ENCODE measurements at regions of chr18 and their contacts with region 1.

Region 1: DNA sequence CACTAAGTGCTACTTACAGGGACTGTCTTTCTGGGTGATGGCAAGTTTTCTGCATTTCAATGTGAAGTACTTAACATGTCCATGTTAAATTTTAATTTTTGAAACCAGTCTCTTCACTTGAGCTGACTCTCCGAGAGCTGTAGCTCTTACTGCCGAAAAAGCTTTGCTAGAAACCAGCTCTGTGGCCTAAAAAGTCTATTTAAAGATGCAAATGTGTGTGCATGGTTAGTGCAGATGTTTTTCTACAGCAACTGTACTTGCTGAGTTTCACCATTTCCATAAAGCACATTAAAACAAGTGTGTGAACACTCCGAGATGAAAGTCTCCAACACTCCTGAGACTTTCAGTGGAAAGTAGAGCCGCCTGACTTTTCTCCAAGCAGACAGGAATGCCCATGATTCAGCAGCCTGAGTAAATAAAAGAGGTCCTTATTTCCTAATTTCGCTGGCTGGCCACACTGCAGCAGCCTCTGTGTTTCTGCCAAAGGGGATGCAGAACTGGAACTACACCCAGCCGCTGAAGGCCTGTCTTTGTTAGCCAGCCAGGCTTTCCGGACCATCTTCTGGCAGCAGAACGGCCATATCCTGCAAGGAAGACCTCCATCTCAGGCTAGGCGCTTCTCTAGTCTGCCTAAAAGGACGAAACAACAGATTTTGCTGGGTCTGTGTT is 121.2 kb downstream of the ZNF521 start:
- DNase-seq: peak; percentile 84
- ATAC-seq: peak; percentile 87 to 91

Region 2: GRCh38 chr18:24987303-24988252 is 243.2 kb before region 1 on chr18:
- intact Hi-C with region 1: loop called in 1 of 2 experiments (anchors 10 kb)
- DNase-seq: peak; percentile 51
- ATAC-seq: peak; percentile 65 to 83

Region 3: DNA sequence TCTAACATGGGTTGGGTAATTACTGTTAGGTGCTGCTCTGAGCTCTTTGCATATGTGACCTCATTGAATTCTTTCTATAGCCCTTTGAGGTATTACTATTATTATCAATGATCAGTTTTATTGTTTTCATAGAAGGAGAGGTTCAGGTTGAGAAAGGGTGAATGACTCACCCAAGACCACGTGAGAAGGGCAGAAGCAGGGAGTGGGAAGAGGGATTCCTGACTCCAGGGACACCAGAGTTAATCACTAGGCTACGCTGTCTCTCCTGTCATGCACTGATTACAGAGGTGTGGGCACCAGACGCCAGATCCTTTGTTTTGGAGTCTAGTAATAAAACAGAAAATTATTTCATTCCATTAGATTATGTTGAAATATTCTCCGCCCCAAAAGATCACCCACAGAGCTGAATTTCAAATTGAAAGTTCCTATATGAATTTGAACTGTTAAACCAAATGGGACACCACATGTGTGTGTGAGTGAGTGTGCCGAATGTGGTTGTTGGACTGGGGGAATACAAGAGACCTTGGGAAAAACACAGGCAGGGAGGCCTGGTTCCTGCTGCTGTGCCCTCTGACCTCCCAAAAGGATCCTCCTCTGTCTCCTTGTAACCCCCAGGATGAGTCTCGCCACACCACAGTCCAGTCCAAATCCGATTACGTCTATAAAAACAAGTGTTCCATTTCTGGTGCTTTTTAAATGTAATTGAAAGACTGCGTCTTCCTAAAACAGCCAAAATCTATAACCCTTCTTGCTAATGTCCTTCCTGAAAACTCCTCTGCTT is 94.2 kb before region 1 on chr18:
- intact Hi-C with region 1: loop called in 1 of 2 experiments (anchors 10 kb)
- DNase-seq: peak; percentile 36
- ATAC-seq: peak; percentile 73 to 88

Region 4: DNA sequence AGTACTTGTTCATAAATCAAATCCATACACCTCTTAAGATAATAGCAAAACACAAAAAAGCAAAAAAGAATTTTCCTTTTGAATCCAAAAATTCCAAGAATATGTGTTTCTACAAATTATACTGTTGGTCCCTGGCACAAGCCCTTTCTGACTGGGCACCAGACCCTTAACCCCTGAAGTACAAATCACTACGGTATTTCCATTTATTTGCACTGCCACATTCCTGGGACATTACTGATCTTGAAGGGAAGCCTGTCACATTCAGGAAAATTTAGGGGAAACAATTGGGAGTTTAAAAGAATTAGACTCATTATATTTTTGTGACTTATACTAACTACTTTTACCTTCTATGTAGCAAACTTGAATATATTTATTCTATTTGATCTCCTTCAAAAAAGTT is 22.3 kb after region 1 on chr18:
- intact Hi-C with region 1: no loop called
- DNase-seq: no peak
- ATAC-seq: no peak

Region 5: DNA sequence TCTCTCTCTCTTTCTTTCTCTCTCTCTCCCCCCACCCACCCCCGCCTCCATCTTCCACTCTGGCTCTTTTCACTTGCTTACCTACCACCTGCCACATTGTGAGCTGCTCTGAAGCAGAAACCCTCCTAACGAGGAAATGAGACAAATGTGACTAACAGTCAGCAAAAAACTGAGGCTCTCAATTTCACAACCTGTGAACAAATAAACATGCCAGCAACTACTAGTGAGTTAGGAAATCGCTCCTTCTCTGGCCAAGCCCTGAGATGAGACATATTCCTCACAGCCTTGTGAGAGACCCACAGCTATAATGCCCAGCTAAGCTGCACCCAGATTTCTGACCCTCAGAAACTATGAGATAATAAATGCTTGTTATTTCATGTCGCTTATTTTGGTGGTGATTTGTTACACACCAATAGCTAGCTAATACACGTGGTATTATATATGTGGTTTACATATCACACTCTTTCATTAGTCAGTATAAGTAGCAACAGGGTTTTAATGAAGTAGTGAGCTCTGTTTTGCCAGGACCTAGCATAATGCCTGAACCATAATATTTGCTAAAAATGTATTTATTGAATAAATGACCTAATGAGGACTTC is 129.6 kb after region 1 on chr18:
- intact Hi-C with region 1: no loop called
- DNase-seq: no peak
- ATAC-seq: no peak

Region 6: GRCh38 chr18:25373432-25374179 is 142.8 kb after region 1 on chr18:
- intact Hi-C with region 1: no loop called
- DNase-seq: no peak
- ATAC-seq: no peak